A549 (cell line): ENCODE measurements at regions of chr7 and their contacts with region 1.

Region 1: DNA sequence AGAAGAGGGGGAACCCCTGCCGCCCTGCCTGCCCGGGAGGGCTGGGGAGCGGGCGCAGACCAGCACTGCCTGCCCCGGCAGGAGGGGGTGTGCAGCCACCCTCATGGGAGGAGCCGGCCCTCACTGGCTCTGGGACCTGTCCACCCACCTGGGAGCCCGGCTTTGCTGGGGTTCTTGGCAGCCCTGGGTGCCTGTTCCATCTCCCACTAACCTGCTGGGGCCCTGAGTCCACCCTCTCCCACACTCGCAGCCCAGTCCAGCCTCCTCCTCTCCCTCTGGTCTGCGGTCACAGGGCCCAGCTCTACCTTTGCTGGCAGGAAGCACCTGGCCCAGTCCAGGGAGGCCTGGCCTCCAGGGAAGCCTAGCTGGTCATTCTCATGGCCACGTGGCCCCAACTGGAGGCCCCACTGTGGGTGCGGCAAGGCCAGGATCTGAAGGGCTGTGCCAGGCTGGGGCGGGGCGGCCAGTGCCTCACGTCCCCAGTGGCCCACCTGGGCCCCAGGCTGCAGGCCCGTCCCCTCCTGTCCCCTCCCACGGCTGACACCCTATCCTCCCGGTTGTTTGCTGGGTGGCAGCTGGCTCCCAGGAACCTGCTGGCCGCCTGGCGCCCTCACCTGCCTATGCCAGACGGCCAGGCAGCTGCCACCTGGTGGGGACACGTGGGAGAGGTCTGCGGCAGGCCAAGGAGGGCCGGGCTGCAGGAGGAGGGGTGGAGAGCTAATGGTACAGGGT is at the start of gene TMEM184A:
- DNase-seq: peak; percentile 90 to 91
- ATAC-seq: peak; percentile 39 to 58
- H3K4me3 ChIP-seq: peak within 1 kb of the TSS; percentile 55
- H3K27ac ChIP-seq: peak within 1 kb of the TSS; percentile 97 to 99
- H3K4me1 ChIP-seq: peaks cover 46% of the 10 kb centered on the region
- CTCF ChIP-seq: peak; percentile 69
- EP300 ChIP-seq: no peak
- POLR2A ChIP-seq: peak; percentile 44; the same call in 1 of the 2 replicates
- RAD21 ChIP-seq: peak; percentile 47 to 64
- polyA plus RNA-seq, gene TMEM184A: 18.4 and 22.0 TPM in 2 replicates

Region 2: GRCh38 chr7:1503816-1504775 is 51.9 kb before region 1 on chr7 and contains the start of gene INTS1:
- CTCF ChIA-PET with region 1: interaction called, 103 read pairs
- POLR2A ChIA-PET with region 1: no interaction called
- DNase-seq: peak; percentile 85 to 95
- ATAC-seq: peak; percentile 86 to 87
- H3K4me3 ChIP-seq: peak within 1 kb of the TSS; percentile 93
- H3K27ac ChIP-seq: peak within 1 kb of the TSS; percentile 87 to 98
- H3K4me1 ChIP-seq: peaks cover 51% of the 10 kb centered on the region
- CTCF ChIP-seq: peak; percentile 86
- EP300 ChIP-seq: peak in 1 of 2 experiments; percentile 16; a peak in 1 of 5 replicates
- POLR2A ChIP-seq: peak; percentile 9
- RAD21 ChIP-seq: peak; percentile 33 to 73; a peak in 4 of 5 replicates
- polyA plus RNA-seq, gene INTS1: 14.6 and 18.4 TPM in 2 replicates

Region 3: GRCh38 chr7:1512781-1513656 is 43.0 kb before region 1 on chr7:
- CTCF ChIA-PET with region 1: interaction called, 103 read pairs
- POLR2A ChIA-PET with region 1: interaction called, 5 read pairs
- DNase-seq: peak; percentile 91 to 94
- ATAC-seq: peak; percentile 79 to 86
- H3K4me3 ChIP-seq: no peak overlapping the region
- H3K27ac ChIP-seq: peak overlapping the region; percentile 95 to 98
- H3K4me1 ChIP-seq: peaks cover 63% of the 10 kb centered on the region
- CTCF ChIP-seq: no peak
- EP300 ChIP-seq: peak; percentile 46 to 70; a peak in 2 of 5 replicates
- POLR2A ChIP-seq: no peak
- RAD21 ChIP-seq: peak in 1 of 2 experiments; percentile 36; a peak in 2 of 5 replicates

Region 4: GRCh38 chr7:1532483-1533424 is 23.2 kb before region 1 on chr7:
- CTCF ChIA-PET with region 1: interaction called, 204 read pairs
- POLR2A ChIA-PET with region 1: interaction called, 18 read pairs
- DNase-seq: peak; percentile 72 to 86
- ATAC-seq: peak; percentile 9 to 22; a peak in 3 of 6 replicates
- H3K4me3 ChIP-seq: peak overlapping the region; percentile 98
- H3K27ac ChIP-seq: peak overlapping the region; percentile 97 to 98
- H3K4me1 ChIP-seq: peaks cover 44% of the 10 kb centered on the region
- CTCF ChIP-seq: no peak
- EP300 ChIP-seq: peak in 1 of 2 experiments; percentile 26; a peak in 2 of 5 replicates
- POLR2A ChIP-seq: peak; percentile 45
- RAD21 ChIP-seq: no peak

Region 5: GRCh38 chr7:1537535-1538412 is 18.2 kb before region 1 on chr7:
- CTCF ChIA-PET with region 1: interaction called, 204 read pairs
- POLR2A ChIA-PET with region 1: interaction called, 18 read pairs
- DNase-seq: peak; percentile 86 to 93
- ATAC-seq: peak; percentile 9 to 10
- H3K4me3 ChIP-seq: peak overlapping the region; percentile 98
- H3K27ac ChIP-seq: peak overlapping the region; percentile 97 to 98
- H3K4me1 ChIP-seq: peaks cover 81% of the 10 kb centered on the region
- CTCF ChIP-seq: no peak
- EP300 ChIP-seq: peak; percentile 26 to 33; a peak in 2 of 5 replicates
- POLR2A ChIP-seq: peak; percentile 36; the same call in 1 of the 2 replicates
- RAD21 ChIP-seq: no peak

Region 6: DNA sequence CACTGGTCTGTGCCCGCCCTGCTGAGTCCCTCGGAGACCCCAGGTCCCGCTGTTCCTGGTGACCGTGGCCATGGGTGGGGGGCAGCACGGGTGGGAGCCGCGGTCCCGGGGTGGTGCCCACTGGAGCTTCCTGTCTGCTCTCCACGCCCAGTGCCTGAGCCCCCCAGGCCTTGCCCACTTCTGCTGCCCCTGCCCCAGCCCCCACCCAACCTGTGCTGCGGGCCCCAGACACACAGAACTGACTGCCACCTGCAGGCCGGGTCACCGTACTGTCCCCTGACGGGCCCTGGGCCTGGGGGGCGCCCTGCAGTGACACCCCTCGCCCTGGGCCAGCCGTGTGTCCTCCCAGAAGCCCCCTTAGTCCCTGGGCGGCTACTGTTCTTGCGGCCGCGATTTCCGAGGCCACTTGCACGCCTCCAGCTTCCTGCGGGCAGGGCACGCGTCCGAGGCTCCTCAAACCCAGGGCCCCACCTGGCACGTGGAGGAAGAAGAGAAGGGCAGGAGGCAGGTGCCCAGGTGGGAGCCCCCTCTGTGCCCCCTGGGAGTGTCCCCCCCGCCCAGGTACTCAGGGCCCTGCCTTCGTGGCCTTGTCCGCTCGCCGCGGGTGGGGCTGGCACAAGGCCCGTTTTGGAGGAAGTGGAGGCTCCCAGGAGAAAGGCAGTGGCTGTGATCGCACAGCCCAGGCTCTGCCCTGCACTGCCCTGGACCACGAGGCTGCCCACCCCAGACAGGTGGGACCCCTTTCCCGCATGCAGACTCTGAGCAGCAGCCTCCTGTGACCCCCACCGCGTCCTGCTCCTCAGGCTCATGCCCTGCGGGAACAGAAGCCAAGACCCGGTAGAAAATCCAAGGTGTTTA is 10.4 kb before region 1 on chr7:
- CTCF ChIA-PET with region 1: interaction called, 204 read pairs
- POLR2A ChIA-PET with region 1: interaction called, 24 read pairs
- DNase-seq: peak in 1 of 2 experiments; percentile 55
- ATAC-seq: peak; percentile 1 to 3; a peak in 3 of 6 replicates
- H3K4me3 ChIP-seq: no peak overlapping the region
- H3K27ac ChIP-seq: peak overlapping the region; percentile 97 to 98; a peak in 5 of 6 replicates
- H3K4me1 ChIP-seq: peaks cover 75% of the 10 kb centered on the region
- CTCF ChIP-seq: no peak; the same call in 2 of the 3 replicates
- EP300 ChIP-seq: no peak
- POLR2A ChIP-seq: no peak
- RAD21 ChIP-seq: peak; percentile 24 to 28; a peak in 2 of 5 replicates

Region 7: GRCh38 chr7:1567094-1567771 is 11.3 kb after region 1 on chr7:
- CTCF ChIA-PET with region 1: interaction called, 16 read pairs
- POLR2A ChIA-PET with region 1: no interaction called
- DNase-seq: peak in 1 of 2 experiments; percentile 66
- ATAC-seq: peak in 1 of 2 experiments; percentile 2; a peak in 1 of 6 replicates
- H3K4me3 ChIP-seq: no peak overlapping the region; the same call in 2 of the 3 replicates
- H3K27ac ChIP-seq: peak overlapping the region; percentile 62 to 99
- H3K4me1 ChIP-seq: peaks cover 56% of the 10 kb centered on the region
- CTCF ChIP-seq: no peak
- EP300 ChIP-seq: no peak
- POLR2A ChIP-seq: no peak
- RAD21 ChIP-seq: no peak

Region 8: DNA sequence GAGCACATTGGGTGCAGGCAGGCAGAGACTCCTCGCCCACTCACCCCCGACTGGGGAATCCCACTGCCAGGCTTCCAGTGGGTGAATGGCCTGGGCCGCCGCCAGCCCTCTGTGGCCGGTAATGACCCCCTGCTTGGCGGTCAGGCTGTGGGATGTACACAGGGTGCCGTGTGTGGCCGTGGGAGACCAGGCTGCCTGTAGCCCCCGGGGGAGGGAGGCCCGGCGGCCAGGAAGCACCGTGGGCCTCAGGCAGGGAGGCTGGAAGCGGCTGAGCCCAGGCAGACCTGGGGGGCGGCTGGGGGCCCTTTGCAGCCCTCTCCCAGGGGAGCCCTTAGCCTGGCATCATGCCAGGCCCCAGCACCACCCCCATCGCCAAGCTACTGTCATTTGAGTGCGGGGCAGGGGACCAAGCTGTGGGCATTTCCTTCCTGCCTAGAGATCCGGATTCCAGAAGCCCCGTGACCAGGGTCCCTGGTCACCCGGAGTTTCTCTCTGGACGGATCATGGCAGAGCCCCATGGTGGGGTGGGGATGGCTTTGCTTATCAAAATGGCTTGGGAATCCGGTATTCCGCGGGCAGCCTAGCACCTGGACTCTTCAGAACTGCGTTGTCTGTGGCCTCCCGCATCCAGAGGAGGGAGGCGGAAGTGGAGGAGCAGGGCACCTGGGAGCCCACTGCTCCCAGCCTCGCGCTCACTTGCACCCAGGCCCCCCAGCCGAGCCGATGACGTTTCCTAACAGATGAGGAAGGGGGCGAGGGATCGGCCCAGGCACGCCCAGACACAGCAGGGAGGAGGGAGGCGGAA is 1077.0 kb after region 1 on chr7:
- CTCF ChIA-PET with region 1: no interaction called
- POLR2A ChIA-PET with region 1: no interaction called
- DNase-seq: peak; percentile 57 to 63
- ATAC-seq: peak; percentile 35 to 69
- H3K4me3 ChIP-seq: peak overlapping the region; percentile 89
- H3K27ac ChIP-seq: peak overlapping the region; percentile 84 to 95
- H3K4me1 ChIP-seq: peaks cover 33% of the 10 kb centered on the region
- CTCF ChIP-seq: no peak
- EP300 ChIP-seq: no peak
- POLR2A ChIP-seq: peak; percentile 32; the same call in 1 of the 2 replicates
- RAD21 ChIP-seq: no peak